RWPE1 (cell line): ENCODE measurements at regions of chr16 and their contacts with region 1.

Region 1: GRCh38 chr16:73057291-73058210 is 9.6 kb upstream of the ZFHX3 start:
- DNase-seq: no peak
- H3K27ac ChIP-seq: peak overlapping the region; percentile 95
- CTCF ChIP-seq: peak; percentile 34

Region 2: GRCh38 chr16:72921106-72921505 is 136.4 kb before region 1 on chr16:
- CTCF ChIA-PET with region 1: no interaction called
- POLR2A ChIA-PET with region 1: no interaction called
- DNase-seq: no peak
- H3K27ac ChIP-seq: no peak overlapping the region
- CTCF ChIP-seq: no peak

Region 3: DNA sequence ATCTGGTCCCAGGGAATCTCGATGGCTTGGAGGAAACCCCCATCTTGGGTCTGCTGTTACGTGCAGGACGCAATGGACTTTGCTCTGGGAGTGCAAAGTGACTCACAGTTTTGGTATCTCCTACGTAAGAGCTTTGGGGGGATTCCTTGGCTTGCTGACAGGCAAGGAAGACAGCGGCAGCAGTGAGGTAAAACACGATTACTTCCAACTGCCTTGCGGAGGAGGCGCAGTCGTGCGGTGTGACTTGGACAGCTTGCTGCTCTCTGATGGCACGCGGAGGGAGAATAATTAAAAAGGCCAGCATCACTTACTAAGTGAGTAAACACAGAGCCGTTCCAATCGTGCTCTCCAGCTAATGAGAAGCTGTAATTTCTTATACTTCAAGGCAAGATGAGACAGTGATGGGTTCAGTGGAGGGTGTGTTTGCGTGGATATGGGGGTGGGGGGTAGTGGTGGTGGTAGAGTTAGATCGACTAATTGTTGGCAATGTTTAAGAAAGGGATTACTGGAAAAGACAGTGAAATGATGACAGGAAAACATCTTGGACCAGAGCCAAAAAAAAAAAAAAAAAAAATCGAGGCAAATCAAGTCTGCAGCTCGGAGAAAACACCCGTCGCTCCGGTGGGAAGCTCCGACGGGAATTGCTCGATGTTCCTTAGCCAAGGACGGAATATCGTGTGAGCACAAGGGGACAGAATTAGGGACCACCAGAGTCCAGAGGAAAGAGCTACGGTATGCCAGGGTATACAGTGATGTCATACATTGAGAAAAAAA is 175.2 kb after region 1 on chr16:
- CTCF ChIA-PET with region 1: no interaction called
- POLR2A ChIA-PET with region 1: interaction called, 13 read pairs
- DNase-seq: no peak
- H3K27ac ChIP-seq: no peak overlapping the region
- CTCF ChIP-seq: no peak